GM13976 (cell line): ENCODE measurements at regions of chr9 and their contacts with region 1.

Region 1: GRCh38 chr9:75071530-75072124 is 16.3 kb downstream of the NMRK1 start:
- DNase-seq: no peak
- CTCF ChIP-seq: no peak

Region 2: GRCh38 chr9:74773886-74774479 is 297.6 kb before region 1 on chr9:
- in situ Hi-C with region 1: loop called (anchors 5 kb)
- DNase-seq: peak; percentile 58
- CTCF ChIP-seq: peak; percentile 90

Region 3: DNA sequence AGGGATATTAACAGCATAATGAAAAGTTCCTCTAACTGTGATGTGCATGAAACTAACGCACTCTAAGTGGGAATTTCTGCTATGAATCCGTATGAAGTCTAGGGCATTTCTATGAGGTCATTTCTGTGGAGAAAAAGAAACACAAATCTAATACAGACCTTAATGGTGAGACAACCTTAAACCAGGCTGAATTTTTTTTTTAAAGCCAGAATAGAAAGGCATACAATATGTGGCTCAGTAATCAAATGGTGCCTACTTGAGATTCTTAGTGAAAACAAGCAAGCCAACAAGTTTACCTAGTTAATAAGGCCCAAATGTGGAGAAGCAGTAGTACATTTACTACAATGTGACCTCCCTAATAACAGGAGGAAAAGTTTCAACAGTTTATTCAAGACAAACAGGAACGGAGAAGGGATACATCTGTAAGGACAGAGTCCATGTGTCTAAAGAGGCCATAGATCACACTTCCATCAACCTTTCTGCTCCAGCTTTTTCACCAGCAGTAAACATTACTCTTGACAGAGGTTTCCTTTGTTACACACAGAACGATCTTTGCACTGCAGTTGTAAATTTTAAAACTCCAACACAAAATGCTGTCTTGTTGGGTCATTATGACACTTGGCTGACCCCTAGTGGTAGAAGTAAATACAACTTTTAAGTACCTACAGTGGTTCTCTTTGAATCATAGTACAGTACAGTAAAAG is 69.8 kb before region 1 on chr9:
- in situ Hi-C with region 1: loop called (anchors 10 kb)
- DNase-seq: peak; percentile 40
- CTCF ChIP-seq: peak; percentile 47